HEK293T (cell line): ENCODE measurements at regions of chr11 and their contacts with region 1.

Region 1: GRCh38 chr11:11787305-11788062 is 54.3 kb upstream of the USP47 start:
- DNase-seq: peak; percentile 70

Region 2: GRCh38 chr11:11028017-11028692 is 759.3 kb before region 1 on chr11:
- CTCF ChIA-PET with region 1: interaction called, 15 read pairs
- POLR2A ChIA-PET with region 1: no interaction called
- DNase-seq: peak; percentile 71

Region 3: GRCh38 chr11:11659567-11660362 is 127.7 kb before region 1 on chr11:
- CTCF ChIA-PET with region 1: no interaction called
- POLR2A ChIA-PET with region 1: no interaction called
- DNase-seq: peak; percentile 43

Region 4: GRCh38 chr11:11770296-11770695 is 17.2 kb before region 1 on chr11:
- CTCF ChIA-PET with region 1: no interaction called
- POLR2A ChIA-PET with region 1: no interaction called
- DNase-seq: no peak